Stomach (tissue), 19 donors: ENCODE measurements at regions of chr11 and their contacts with region 1.

Region 1: GRCh38 chr11:117316197-117316961 is at the start of gene BACE1:
- DNase-seq: peak; percentile 77 to 95
- H3K4me3 ChIP-seq: peak within 1 kb of the TSS; percentile 77 to 92 (median 88)
- H3K27ac ChIP-seq: peak within 1 kb of the TSS in 4 of 5 donors; percentile 32 to 83 (median 65)
- H3K4me1 ChIP-seq: peaks cover 19 to 34% (median 26%) of the 10 kb centered on the region in 4 donors
- H3K27me3 ChIP-seq: no peaks in the 10 kb centered on the region
- CTCF ChIP-seq: peak in 3 of 7 experiments; percentile 3 to 23 (median 6)
- EP300 ChIP-seq: no peak
- POLR2A ChIP-seq: no peak
- total RNA-seq, gene BACE1: 12.8 to 21.1 (median 16.4) TPM

Region 2: GRCh38 chr11:117232092-117232878 is 84.1 kb before region 1 on chr11 and contains the start of gene RNF214:
- intact Hi-C with region 1: loop called (anchors 10 kb)
- DNase-seq: peak; percentile 82 to 95
- H3K4me3 ChIP-seq: peak within 1 kb of the TSS; percentile 64 to 93 (median 80)
- H3K27ac ChIP-seq: peak within 1 kb of the TSS; percentile 96 to 99 (median 96)
- H3K4me1 ChIP-seq: peaks cover 27 to 47% (median 42%) of the 10 kb centered on the region in 4 donors
- H3K27me3 ChIP-seq: no peaks in the 10 kb centered on the region
- CTCF ChIP-seq: peak in 5 of 7 experiments; percentile 71 to 98 (median 87)
- EP300 ChIP-seq: no peak
- POLR2A ChIP-seq: no peak
- total RNA-seq, gene RNF214: 6.7 to 21.6 (median 13.8) TPM